Activated naive CD4-positive, alpha-beta T cell treated with anti-CD3 and anti-CD28 coated beads for 36 hours (primary cell): ENCODE measurements at regions of chr1 and their contacts with region 1.

Region 1: DNA sequence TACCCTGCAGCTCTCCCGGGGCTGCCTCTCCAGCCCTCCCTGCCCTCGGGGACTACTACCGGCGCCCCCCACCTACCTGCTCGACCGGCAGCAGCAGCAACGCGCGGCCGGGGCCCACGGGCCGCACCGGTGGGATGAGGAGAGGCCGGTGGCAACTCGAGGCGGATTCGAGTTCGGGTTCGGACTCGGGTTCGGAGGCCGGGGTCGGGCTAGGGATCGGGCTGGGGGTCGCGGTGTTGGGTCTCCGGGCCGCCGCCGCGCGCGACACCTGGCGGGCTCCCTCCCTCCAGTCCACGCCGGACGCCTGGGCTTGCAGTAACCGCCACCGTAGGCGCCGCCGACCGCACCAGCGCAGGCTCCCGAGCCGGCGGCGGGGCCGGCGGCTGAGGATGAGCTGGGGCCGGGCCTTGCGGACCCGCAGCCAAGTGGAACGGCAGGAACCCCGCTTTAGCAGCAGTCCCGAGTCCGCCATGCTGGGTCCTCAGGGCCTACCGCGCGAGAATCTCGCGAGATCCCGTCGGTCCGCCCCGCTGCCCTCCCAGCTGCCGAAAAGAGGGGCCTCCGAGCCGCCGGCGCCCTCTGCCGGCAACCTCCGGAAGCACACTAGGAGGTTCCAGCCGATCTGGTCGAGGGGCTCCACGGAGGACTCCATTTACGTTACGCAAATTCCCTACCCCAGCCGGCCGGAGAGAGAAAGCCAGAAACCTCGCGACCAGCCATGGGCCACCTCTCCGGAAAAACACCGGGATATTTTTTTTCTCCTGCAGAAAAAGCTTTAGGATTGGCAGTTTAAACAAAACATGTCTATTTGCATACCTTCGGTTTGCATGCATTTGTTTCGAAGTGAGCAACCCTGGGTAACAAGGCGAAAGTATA is at the start of gene NOL9:
- DNase-seq: peak; percentile 96
- H3K4me3 Mint-ChIP-seq: peak within 1 kb of the TSS; percentile 80
- H3K27ac Mint-ChIP-seq: peak within 1 kb of the TSS; percentile 24
- H3K4me1 Mint-ChIP-seq: peaks cover 19% of the 10 kb centered on the region
- H3K27me3 Mint-ChIP-seq: no peaks in the 10 kb centered on the region
- total RNA-seq, gene NOL9: 24.6 to 29.6 TPM

Region 2: DNA sequence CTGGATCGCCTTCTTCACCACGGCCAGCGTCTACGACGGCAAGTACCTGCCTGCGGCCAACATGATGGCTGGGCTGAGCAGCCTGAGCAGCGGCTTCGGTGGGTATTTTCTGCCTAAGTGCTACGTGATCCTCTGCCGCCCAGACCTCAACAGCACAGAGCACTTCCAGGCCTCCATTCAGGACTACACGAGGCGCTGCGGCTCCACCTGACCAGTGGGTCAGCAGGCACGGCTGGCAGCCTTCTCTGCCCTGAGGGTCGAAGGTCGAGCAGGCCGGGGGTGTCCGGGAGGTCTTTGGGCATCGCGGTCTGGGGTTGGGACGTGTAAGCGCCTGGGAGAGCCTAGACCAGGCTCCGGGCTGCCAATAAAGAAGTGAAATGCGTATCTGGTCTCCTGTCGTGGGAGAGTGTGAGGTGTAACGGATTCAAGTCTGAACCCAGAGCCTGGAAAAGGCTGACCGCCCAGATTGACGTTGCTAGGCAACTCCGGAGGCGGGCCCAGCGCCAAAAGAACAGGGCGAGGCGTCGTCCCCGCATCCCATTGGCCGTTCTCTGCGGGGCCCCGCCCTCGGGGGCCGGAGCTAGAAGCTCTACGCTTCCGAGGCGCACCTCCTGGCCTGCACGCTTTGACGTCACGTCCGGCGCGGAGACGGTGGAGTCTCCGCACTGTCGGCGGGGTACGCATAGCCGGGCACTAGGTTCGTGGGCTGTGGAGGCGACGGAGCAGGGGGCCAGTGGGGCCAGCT is 25.3 kb after region 1 on chr1 and contains the start of gene ZBTB48:
- CTCF ChIA-PET with region 1: interaction called, 4 read pairs
- intact Hi-C with region 1: loop called (anchors 1 kb)
- DNase-seq: peak; percentile 98
- H3K4me3 Mint-ChIP-seq: peak within 1 kb of the TSS; percentile 97
- H3K27ac Mint-ChIP-seq: peak within 1 kb of the TSS; percentile 94
- H3K4me1 Mint-ChIP-seq: peaks cover 34% of the 10 kb centered on the region
- H3K27me3 Mint-ChIP-seq: no peaks in the 10 kb centered on the region
- total RNA-seq, gene ZBTB48: 15.0 to 18.3 TPM

Region 3: DNA sequence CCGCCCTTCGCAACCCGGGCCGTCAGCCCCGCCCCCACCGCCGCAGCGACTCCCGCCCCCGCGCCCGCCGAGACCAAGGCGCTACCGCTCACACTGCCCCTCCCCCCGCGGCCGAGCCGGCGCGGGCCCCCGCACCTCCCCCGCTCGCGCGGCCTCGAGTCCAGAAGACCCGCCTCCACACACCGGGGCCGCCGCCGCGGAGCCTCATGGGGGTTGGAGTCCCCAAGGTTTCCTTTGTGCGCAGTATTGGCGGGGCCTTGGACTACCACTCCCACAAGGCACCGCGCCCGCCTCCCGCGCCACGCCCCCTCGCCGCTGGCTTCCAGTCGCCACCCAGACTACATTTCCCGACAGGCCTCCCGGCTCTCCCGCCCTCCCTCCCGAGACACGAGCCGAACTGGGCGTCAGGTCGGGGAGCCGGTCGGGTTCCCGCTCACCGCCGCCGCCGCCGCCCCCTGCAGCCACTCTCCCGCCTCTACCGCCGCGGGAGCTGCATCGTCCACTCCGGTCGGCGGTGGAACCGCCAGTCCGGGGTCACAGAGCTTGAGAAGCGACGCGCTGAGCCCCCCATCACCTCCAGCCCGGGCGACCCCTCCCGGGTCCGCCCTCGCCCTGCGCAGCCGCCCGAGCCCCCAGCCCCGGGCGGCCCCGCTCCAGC is 59.2 kb after region 1 on chr1 and contains the start of gene PHF13:
- CTCF ChIA-PET with region 1: interaction called, 3 read pairs
- intact Hi-C with region 1: loop called (anchors 1 kb)
- DNase-seq: peak; percentile 100
- H3K4me3 Mint-ChIP-seq: peak within 1 kb of the TSS; percentile 87
- H3K27ac Mint-ChIP-seq: peak within 1 kb of the TSS; percentile 81
- H3K4me1 Mint-ChIP-seq: peaks cover 17% of the 10 kb centered on the region
- H3K27me3 Mint-ChIP-seq: no peaks in the 10 kb centered on the region
- total RNA-seq, gene PHF13: 10.8 to 11.3 TPM

Region 4: DNA sequence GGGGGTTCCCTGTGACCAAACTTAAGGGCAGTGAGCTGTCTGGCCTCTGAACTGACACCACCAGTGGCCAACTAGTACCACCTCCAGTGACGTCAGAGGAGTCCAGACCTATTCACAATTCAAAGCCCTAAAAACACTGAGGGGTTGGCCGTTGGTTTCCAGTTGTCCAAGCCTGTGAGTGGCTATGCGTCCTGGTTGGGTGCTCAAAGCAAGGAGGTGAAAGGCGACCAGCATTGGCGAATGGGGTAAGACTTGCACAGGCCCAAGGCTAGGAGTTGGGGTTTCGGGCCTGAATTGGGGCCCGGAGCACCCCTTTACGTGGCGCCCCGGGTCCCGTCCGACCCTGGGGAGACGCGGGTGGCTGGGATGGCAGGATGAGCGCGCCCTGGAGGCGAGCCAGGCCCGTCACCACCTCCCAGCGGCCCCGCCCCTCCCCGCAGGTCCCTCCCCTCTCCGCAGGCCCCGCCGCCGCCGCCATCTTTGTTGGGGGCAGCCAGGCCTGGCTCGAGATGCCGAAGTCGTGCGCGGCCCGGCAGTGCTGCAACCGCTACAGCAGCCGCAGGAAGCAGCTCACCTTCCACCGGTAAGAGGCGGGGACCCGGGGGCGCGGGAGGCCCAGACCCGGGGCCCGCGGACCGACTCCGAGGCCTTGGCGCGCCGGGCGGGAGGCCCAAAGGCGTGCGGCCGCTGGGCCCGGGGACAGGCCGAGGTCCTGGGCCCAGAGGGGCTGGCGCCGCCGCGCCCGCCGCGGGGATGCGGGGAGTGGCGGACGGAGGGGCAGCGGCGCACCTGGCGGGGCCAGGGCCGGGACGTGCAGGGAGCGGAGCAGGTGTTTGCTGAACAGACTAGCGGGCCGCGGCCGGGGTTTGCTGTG is 70.7 kb after region 1 on chr1 and contains the start of gene THAP3:
- CTCF ChIA-PET with region 1: interaction called, 12 read pairs
- intact Hi-C with region 1: loop called (anchors 5 kb)
- DNase-seq: peak; percentile 91
- H3K4me3 Mint-ChIP-seq: peak within 1 kb of the TSS; percentile 87
- H3K27ac Mint-ChIP-seq: peak within 1 kb of the TSS; percentile 66
- H3K4me1 Mint-ChIP-seq: peaks cover 29% of the 10 kb centered on the region
- H3K27me3 Mint-ChIP-seq: no peaks in the 10 kb centered on the region
- total RNA-seq, gene THAP3: 27.3 to 30.9 TPM

Region 5: GRCh38 chr1:6646499-6647148 is 92.4 kb after region 1 on chr1:
- CTCF ChIA-PET with region 1: interaction called, 5 read pairs
- intact Hi-C with region 1: loop called (anchors 1 kb)
- DNase-seq: peak; percentile 42
- H3K4me3 Mint-ChIP-seq: no peak overlapping the region
- H3K27ac Mint-ChIP-seq: no peak overlapping the region
- H3K4me1 Mint-ChIP-seq: no peaks in the 10 kb centered on the region
- H3K27me3 Mint-ChIP-seq: no peaks in the 10 kb centered on the region

Region 6: DNA sequence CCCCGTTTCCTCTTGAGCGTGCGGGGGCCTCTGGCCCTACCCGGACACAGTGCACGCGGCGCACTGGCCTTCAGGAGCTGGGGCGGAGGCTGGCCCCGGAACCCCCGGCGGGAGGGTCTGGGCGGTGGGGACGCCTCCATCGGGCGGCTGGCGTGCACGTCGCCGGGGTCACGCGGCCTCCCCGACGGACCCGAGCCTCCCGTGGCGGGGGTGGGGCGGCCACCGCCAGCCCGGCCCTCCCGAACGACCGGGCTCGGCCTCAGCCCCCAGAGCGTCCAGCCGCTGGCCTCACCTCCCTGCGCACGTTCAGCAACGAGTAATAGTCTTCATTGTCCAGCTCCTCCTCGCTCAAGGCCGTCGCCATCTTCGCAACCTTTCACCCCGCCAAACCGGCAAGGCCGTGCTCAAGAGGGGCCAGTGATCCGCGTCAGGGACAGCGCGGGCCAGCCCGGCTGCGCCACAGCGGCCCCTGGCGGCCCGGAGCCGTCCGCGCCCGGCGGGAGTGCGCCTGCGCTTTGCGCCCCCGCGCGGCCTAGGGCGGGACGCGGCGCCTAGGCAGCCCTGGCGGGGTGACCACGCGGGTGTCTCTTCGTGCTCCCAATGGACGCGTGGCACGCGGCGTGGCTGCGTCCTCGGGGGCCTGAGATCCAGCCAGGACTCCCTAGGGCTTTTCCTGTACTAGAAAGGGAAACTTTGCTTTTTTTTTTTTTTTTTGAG is 147.3 kb after region 1 on chr1 and contains the start of gene DNAJC11:
- CTCF ChIA-PET with region 1: no interaction called
- intact Hi-C with region 1: loop called (anchors 5 kb)
- DNase-seq: peak; percentile 91
- H3K4me3 Mint-ChIP-seq: peak within 1 kb of the TSS; percentile 88
- H3K27ac Mint-ChIP-seq: peak within 1 kb of the TSS; percentile 86
- H3K4me1 Mint-ChIP-seq: peaks cover 31% of the 10 kb centered on the region
- H3K27me3 Mint-ChIP-seq: no peaks in the 10 kb centered on the region
- total RNA-seq, gene DNAJC11: 31.6 to 32.5 TPM